ENCODE measurements at regions of chr16 and their contacts with region 1.

Region 1: DNA sequence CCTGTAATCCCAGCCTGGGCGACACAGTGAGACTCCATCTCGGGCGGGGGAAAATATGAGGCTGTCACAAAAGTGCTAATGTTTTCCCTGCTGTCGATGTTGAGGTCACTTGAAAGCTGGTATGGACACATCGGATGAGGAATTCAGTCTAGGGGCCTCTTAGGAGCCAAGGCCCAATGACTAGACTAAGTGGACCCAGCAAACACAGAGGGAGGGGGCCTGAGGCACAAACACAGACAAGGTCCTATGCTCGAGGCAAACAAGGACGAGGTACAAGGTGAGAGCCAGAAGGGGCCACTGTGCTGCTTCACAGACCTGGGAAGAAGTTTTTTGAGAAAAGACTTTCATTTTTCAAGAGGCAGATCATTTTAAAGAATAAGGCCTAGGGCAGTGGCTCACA is 15.2 kb downstream of the TRAP1 start:
- DNase-seq: no peak
- H3K4me3 ChIP-seq: no peak overlapping the region
- H3K27ac ChIP-seq: no peak overlapping the region
- H3K4me1 ChIP-seq: no peaks in the 10 kb centered on the region
- H3K27me3 ChIP-seq: no peaks in the 10 kb centered on the region
- CTCF ChIP-seq: no peak
- POLR2A ChIP-seq: no peak

Region 2: GRCh38 chr16:3681206-3681605 is 20.9 kb before region 1 on chr16:
- intact Hi-C with region 1: loop called (anchors 1 kb)
- DNase-seq: no peak
- H3K4me3 ChIP-seq: no peak overlapping the region
- H3K27ac ChIP-seq: no peak overlapping the region
- H3K4me1 ChIP-seq: no peaks in the 10 kb centered on the region
- H3K27me3 ChIP-seq: no peaks in the 10 kb centered on the region
- CTCF ChIP-seq: no peak
- POLR2A ChIP-seq: no peak